Posterior vena cava (tissue), 2 donors: ENCODE measurements at regions of chr5 and their contacts with region 1.

Region 1: DNA sequence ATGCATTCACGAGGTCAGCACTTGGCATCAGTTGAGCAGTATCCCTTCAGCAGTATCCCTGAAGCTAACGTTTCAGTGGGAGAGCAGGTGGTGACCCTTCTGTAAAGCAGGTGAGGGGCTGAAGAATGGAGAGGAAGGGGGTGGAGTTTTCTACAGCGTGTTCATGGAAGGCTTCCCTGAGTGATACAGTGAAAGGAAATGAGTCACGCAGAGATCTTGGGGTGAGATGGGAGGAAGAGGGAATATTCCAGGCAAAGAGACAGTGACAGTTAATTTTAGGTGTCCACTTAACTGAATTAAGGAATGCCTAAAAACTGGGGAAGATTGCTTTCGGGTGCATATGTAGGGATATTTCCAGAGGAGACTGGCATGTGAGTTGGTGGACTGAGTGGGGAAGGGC is 25.7 kb downstream of the TAS2R1 start:
- DNase-seq: no peak

Region 2: GRCh38 chr5:8517456-8517855 is 1087.0 kb before region 1 on chr5:
- intact Hi-C with region 1: loop called in 1 of 2 experiments (anchors 10 kb)
- DNase-seq: no peak

Region 3: DNA sequence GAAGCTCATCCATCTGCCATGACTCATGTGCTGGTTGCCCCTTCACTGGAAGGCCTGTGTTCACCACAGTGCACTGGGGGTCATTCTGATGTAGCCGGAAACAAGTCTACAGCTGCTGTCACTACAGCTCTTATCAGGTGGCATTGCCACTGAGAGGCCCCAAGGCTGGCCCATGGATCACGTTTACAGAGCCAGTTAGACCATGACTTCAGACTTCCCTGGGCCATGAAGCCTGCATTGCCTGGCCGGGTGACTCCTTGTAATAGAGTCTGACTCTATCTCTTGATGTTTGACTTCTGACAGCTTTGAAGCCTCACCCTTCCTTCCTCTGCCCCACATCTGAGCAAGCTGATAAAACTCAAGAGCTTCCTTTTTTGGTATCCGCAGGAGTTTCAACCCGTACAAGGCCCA is 1630.1 kb after region 1 on chr5:
- intact Hi-C with region 1: no loop called
- DNase-seq: no peak